ENCODE measurements at regions of chr11 and their contacts with region 1.

Region 1: GRCh38 chr11:59668950-59669610 is at the start of gene PATL1:
- DNase-seq: peak; percentile 96 to 98
- ATAC-seq: peak; percentile 91 to 95
- H3K4me3 ChIP-seq: peak within 1 kb of the TSS; percentile 90
- H3K27ac ChIP-seq: peak within 1 kb of the TSS; percentile 92 to 98
- H3K4me1 ChIP-seq: peaks cover 17% of the 10 kb centered on the region
- CTCF ChIP-seq: no peak
- EP300 ChIP-seq: no peak
- POLR2A ChIP-seq: peak; percentile 77
- RAD21 ChIP-seq: no peak
- polyA plus RNA-seq, gene PATL1: 54.6 and 61.4 TPM in 2 replicates

Region 2: GRCh38 chr11:59542142-59542810 is 126.8 kb before region 1 on chr11:
- CTCF ChIA-PET with region 1: interaction called, 6 read pairs
- POLR2A ChIA-PET with region 1: interaction called, 11 read pairs
- DNase-seq: no peak
- ATAC-seq: no peak
- H3K4me3 ChIP-seq: no peak overlapping the region
- H3K27ac ChIP-seq: peak overlapping the region in 1 of 2 experiments; percentile 6; a peak in 1 of 6 replicates
- H3K4me1 ChIP-seq: peaks cover 18% of the 10 kb centered on the region
- CTCF ChIP-seq: no peak
- EP300 ChIP-seq: no peak
- POLR2A ChIP-seq: no peak
- RAD21 ChIP-seq: no peak

Region 3: GRCh38 chr11:59550368-59550841 is 118.7 kb before region 1 on chr11:
- CTCF ChIA-PET with region 1: no interaction called
- POLR2A ChIA-PET with region 1: interaction called, 14 read pairs
- DNase-seq: peak; percentile 76 to 99
- ATAC-seq: peak; percentile 90 to 92
- H3K4me3 ChIP-seq: peak overlapping the region; percentile 68
- H3K27ac ChIP-seq: peak overlapping the region; percentile 86 to 95
- H3K4me1 ChIP-seq: peaks cover 32% of the 10 kb centered on the region
- CTCF ChIP-seq: no peak
- EP300 ChIP-seq: no peak
- POLR2A ChIP-seq: no peak
- RAD21 ChIP-seq: peak in 1 of 2 experiments; percentile 6; a peak in 1 of 5 replicates

Region 4: GRCh38 chr11:59560702-59561469 is 108.2 kb before region 1 on chr11:
- CTCF ChIA-PET with region 1: interaction called, 3 read pairs
- POLR2A ChIA-PET with region 1: interaction called, 30 read pairs
- DNase-seq: peak; percentile 83 to 92
- ATAC-seq: peak; percentile 41 to 51
- H3K4me3 ChIP-seq: peak overlapping the region; percentile 87
- H3K27ac ChIP-seq: peak overlapping the region; percentile 86 to 88
- H3K4me1 ChIP-seq: 0 out of 3 replicates have a peak, but pooled peaks cover 5% of the 10 kb centered on the region
- CTCF ChIP-seq: no peak
- EP300 ChIP-seq: no peak
- POLR2A ChIP-seq: no peak
- RAD21 ChIP-seq: no peak

Region 5: DNA sequence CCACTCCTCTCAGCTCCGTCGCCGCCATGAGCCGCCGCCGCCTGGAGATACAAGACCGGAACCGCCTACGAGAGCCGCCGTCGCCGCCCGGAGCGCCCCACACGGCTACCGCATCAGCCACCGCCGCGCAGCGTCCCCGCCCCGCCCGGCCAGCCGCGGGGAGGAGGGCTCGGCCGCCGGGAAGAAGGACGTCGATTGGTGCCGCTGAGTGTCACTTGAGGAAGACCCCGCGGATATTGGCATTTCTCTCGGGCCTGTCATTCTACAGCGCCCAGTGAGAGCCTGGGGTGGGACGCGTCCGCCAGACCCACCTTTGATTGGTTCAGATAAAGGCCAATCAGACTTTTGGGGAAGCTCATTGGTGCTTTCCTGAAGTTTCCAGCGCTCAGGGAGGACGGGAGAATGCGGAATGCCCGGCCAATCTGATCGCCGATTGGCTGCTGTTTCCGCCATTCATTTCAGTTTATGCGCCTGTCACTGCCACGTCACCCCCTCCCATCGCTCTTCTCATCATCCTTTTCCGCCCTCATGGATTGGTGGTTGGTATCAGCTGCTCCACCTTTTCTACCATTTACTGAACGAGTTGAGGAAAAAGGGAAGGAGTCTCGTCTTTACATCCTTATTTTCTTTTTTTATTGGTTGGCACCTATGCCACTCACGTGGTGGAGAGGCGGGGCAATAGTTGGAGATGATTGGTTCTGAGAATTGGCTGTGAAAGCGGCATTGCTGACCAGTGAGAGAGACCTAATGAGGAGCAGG is 53.3 kb before region 1 on chr11 and contains the start of gene OSBP:
- CTCF ChIA-PET with region 1: interaction called, 4 read pairs
- POLR2A ChIA-PET with region 1: interaction called, 43 read pairs
- DNase-seq: peak; percentile 99 to 100
- ATAC-seq: peak; percentile 91 to 95
- H3K4me3 ChIP-seq: peak within 1 kb of the TSS; percentile 75
- H3K27ac ChIP-seq: peak within 1 kb of the TSS; percentile 84 to 97
- H3K4me1 ChIP-seq: peaks cover 29% of the 10 kb centered on the region; the same call in 2 of the 3 replicates
- CTCF ChIP-seq: no peak
- EP300 ChIP-seq: no peak
- POLR2A ChIP-seq: peak; percentile 56
- RAD21 ChIP-seq: no peak
- polyA plus RNA-seq, gene OSBP: 31.7 and 39.6 TPM in 2 replicates

Region 6: DNA sequence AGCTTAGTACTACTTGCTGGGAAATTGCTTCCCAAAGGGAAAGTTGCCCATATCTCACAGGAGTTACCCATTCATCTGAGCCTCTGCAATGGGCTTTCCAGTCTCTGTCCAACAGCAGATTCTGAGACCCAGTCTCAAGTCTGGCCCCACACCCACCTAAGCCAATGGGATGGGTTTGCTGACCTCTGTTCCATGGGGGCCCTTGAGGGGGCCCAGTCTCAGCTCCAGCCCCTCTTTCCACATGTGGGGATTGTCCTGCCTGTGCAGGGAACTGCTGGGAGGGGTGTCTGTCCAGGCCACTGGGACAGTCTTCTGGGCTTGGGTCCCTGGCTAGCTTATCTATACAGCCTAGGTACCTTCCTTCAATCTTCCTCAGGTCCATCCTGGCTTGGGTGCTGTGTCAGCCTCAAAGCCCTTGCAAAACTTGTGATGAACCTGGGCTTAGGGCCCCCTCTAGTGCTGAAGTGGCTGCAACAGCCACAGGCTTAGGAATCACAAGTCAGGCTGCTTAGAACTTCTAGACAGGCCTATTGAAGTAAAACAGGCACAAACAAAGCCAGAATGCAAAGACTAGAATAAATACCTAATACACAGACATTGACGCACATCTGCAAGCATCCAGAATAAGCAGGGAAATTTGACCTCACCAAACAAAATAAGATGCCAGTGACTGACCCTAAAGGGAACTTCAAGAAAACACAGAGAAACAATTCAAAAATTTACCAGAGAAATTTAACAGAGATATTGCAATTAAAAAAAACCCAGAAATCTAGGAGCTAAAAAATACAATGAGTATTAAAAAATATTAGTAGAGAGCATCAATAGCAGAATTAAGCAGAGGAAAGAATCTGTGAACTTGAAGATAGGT is 11.4 kb after region 1 on chr11:
- CTCF ChIA-PET with region 1: interaction called, 30 read pairs
- POLR2A ChIA-PET with region 1: interaction called, 10 read pairs
- DNase-seq: peak; percentile 75 to 89
- ATAC-seq: peak; percentile 99 to 100
- H3K4me3 ChIP-seq: no peak overlapping the region
- H3K27ac ChIP-seq: peak overlapping the region in 1 of 2 experiments; percentile 65; a peak in 2 of 6 replicates
- H3K4me1 ChIP-seq: no peaks in the 10 kb centered on the region
- CTCF ChIP-seq: peak; percentile 81
- EP300 ChIP-seq: no peak
- POLR2A ChIP-seq: no peak
- RAD21 ChIP-seq: peak; percentile 89 to 92

Region 7: GRCh38 chr11:59753650-59754493 is 84.8 kb after region 1 on chr11:
- CTCF ChIA-PET with region 1: interaction called, 5 read pairs
- POLR2A ChIA-PET with region 1: interaction called, 15 read pairs
- DNase-seq: peak; percentile 81 to 90
- ATAC-seq: peak; percentile 54 to 84
- H3K4me3 ChIP-seq: peak overlapping the region; percentile 93
- H3K27ac ChIP-seq: peak overlapping the region; percentile 86 to 95; a peak in 4 of 6 replicates
- H3K4me1 ChIP-seq: peaks cover 15% of the 10 kb centered on the region
- CTCF ChIP-seq: peak; percentile 89
- EP300 ChIP-seq: no peak
- POLR2A ChIP-seq: no peak
- RAD21 ChIP-seq: peak; percentile 90 to 92

Region 8: GRCh38 chr11:59833602-59834001 is 164.5 kb after region 1 on chr11:
- CTCF ChIA-PET with region 1: no interaction called
- POLR2A ChIA-PET with region 1: no interaction called
- DNase-seq: no peak
- ATAC-seq: no peak
- H3K4me3 ChIP-seq: no peak overlapping the region
- H3K27ac ChIP-seq: no peak overlapping the region
- H3K4me1 ChIP-seq: no peaks in the 10 kb centered on the region
- CTCF ChIP-seq: no peak
- EP300 ChIP-seq: no peak
- POLR2A ChIP-seq: no peak
- RAD21 ChIP-seq: no peak